Calu3 (cell line): ENCODE measurements at regions of chr12 and their contacts with region 1.

Region 1: DNA sequence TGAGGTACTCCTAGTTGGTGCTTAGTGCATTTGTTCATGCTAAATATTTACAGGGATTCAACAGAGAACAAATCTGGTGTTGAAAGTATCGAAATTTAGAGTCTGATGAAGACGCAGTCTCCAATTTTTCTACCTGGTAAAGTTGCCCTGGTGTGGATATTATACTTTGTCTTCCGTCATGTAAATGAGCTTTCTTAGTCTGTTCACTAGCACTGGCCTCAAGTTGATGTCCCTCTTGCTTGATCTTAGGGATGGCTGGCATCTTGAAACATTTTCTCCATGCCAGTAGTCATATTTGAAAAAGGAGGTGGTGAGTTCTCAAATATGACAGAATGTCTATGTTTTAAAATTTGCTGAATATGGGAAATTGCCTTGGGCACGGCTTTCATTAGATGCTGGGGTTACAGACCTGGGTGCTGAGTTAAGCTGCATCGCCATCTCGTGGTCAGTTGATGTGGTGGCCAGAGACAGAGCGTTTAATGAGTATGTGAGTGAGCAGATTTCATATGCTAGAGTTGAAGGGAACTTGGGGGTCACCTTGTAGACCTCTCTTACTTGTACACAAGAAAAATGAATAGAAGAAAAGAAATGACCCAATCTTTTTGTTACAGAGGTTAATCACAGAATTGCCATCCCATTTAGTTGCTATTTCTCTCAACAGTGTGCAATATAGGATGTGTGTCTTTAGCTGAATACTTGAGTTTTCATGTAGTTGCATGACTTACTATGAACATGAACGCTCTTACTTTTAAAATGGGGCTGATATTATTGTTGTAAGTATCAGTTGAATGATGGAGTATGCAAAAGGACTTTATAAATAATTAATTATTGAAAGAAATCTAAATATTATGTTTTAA is 172.8 kb upstream of the DCN start:
- DNase-seq: peak; percentile 73
- H3K4me3 Mint-ChIP-seq: no peak overlapping the region
- H3K27ac Mint-ChIP-seq: no peak overlapping the region
- H3K4me1 Mint-ChIP-seq: peaks cover 27% of the 10 kb centered on the region
- H3K27me3 Mint-ChIP-seq: no peaks in the 10 kb centered on the region
- CTCF ChIP-seq: peak; percentile 74

Region 2: GRCh38 chr12:90959538-90960139 is 395.7 kb before region 1 on chr12:
- CTCF ChIA-PET with region 1: interaction called, 4 read pairs
- intact Hi-C with region 1: loop called (anchors 1 kb)
- DNase-seq: peak; percentile 38
- H3K4me3 Mint-ChIP-seq: no peak overlapping the region
- H3K27ac Mint-ChIP-seq: no peak overlapping the region
- H3K4me1 Mint-ChIP-seq: no peaks in the 10 kb centered on the region
- H3K27me3 Mint-ChIP-seq: no peaks in the 10 kb centered on the region
- CTCF ChIP-seq: peak; percentile 65

Region 3: DNA sequence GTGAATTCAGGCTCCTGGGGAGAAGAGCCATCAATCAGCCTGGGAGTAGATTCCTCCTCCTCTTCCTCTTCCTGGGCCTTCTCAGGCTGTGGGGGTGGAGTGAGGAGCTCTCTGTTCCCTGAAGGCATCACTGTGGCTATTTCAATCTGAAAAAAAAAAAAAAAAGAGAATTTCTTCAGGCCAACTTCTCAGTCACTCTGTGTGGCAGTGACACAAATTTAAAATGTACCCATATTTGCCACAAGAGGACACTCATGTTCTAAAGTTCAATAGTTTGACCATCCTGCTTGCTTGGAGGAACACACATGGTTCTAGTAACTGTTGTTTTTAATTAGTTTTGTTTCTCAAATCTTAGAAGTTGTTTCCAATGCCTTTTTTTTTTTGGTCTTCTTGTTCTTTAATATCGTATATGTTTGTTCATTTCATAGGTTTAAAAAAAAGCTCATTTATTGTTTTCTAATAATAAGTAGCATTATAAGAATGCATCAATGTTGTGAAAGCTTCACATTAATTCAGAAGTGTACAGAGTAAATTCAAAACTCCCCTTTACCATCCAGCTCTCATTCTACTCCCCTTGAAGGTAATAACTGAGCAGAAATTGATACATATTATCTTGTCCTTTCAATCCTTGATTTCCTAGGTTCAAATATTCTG is 377.1 kb before region 1 on chr12:
- CTCF ChIA-PET with region 1: no interaction called
- intact Hi-C with region 1: loop called (anchors 1 kb)
- DNase-seq: no peak
- H3K4me3 Mint-ChIP-seq: no peak overlapping the region
- H3K27ac Mint-ChIP-seq: no peak overlapping the region
- H3K4me1 Mint-ChIP-seq: peaks cover 25% of the 10 kb centered on the region
- H3K27me3 Mint-ChIP-seq: no peaks in the 10 kb centered on the region
- CTCF ChIP-seq: peak; percentile 60